Thyroid gland (tissue), 4 donors: ENCODE measurements at regions of chr21 and their contacts with region 1.

Region 1: DNA sequence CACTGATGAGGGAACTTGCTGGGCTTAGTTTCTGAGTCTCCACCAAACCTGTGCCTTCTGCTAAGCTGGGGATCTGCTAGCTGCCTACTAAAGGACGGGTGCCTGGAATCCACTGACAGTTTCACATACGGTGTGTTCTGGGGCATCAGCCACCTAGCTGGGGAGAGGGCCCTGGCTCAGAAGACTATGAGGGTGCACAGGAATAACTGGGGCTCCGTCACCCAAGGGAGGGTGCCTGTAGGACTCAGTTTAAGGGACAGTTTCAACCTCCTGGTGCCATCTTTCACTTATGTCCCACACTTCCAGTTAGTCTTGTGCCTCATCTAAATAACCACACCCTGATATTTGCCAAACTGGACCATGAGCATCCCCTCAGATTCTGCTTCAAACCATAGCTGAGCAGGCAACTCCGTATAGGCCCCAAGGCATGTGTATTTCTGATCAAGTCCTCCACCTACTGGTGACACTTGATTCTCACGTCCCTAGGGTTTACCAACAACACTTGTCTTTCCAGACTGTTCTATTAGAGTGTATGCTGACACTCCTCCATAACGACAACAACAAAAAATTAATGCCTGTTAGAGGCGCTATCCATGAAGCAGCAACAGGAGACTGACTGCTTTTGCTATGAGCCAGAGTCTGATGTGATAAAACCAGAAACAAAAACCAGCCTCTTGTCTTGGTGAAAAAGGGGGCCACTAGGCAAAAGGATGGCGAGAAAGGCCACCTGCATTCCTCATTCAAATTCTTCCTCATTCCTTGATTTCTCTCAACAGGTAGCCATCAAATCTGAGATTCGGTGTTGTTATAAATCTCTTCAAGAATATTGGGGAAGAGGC is 55.0 kb upstream of the PAXBP1 start:
- DNase-seq: peak; percentile 16 to 17
- H3K4me3 ChIP-seq: no peak overlapping the region
- H3K27ac ChIP-seq: no peak overlapping the region
- H3K4me1 ChIP-seq: no peaks in the 10 kb centered on the region
- H3K27me3 ChIP-seq: no peaks in the 10 kb centered on the region
- CTCF ChIP-seq: peak in 2 of 6 experiments; percentile 44 to 51
- POLR2A ChIP-seq: no peak

Region 2: DNA sequence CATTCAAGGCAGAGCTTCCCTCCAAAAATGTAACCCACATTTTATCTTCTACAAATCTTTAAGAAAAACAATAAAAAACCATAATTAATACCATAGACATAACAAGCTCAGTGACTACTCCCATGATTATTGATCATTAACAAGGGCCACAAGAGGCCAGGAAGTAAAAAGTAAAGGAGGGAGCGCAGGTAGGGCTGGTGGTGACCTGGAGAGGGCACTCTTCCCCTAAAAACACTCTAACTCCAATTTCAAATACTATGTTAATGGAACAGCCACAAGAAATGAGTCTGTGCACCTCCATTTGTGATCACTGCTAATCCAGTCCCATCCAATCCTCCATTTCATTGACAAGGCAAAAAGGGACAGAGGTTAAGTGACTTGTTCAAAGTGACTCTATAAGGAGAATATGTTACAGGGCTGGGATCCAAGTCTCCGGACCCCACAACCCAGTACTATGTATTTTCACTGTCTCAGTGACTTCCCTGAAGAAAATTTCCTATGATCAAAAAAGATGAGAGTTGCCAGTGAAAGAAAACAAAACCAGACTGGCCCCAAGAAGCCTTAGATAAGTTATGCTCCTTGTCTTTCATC is 173.1 kb before region 1 on chr21:
- intact Hi-C with region 1: loop called (anchors 5 kb)
- DNase-seq: peak in 1 of 2 donors; percentile 19
- H3K4me3 ChIP-seq: no peak overlapping the region
- H3K27ac ChIP-seq: no peak overlapping the region
- H3K4me1 ChIP-seq: peaks cover 4 to 5% of the 10 kb centered on the region in 2 donors
- H3K27me3 ChIP-seq: no peaks in the 10 kb centered on the region
- CTCF ChIP-seq: peak in 5 of 6 experiments; percentile 28 to 67 (median 60)
- POLR2A ChIP-seq: no peak